Adrenal gland (tissue), 19 donors: ENCODE measurements at regions of chr6 and their contacts with region 1.

Region 1: GRCh38 chr6:151409260-151409659 is 17.9 kb upstream of the ZBTB2 start:
- DNase-seq: no peak
- H3K4me3 ChIP-seq: no peak overlapping the region
- H3K27ac ChIP-seq: no peak overlapping the region
- H3K4me1 ChIP-seq: no peaks in the 10 kb centered on the region
- H3K27me3 ChIP-seq: no peaks in the 10 kb centered on the region
- CTCF ChIP-seq: no peak
- POLR2A ChIP-seq: no peak

Region 2: DNA sequence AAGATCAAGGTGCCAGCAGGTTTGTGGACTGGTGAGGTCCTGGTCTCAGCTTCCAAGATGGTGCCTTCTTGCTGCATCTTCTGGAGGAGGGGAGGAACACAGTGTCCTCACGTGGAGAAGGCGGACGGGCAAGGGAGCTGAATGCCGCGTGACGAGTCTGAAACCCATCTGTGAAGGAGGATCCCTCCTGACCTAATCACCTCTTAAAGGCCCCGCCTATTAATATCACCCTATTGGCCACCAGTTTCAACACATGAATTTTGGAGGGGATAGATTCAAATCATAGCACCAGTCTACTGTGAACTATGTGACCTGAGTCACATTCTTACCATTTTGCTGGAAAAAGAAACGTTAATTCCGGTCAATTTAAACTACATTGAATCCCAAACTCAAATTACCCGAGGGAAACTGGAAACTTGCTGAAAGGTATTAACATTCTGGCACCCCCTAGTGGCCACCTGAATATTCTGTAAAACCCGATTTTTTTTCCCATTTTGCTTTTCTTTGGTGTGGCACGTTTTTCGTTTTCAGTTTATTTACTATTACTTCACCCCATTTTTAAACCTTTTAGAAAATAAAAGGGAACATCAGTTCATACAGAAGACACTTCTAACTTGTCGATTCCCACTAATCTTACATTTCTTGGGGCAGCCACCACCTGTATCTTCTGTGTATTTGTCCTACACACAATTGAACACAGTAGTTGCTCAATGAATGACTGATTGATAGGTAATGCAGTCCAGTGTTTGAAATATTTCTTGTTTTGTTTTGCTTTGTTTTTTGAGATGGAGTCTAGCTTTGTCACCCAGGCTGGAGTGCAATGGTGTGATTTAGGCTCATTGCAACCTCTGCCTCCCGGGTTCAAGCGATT is 66.6 kb after region 1 on chr6:
- intact Hi-C with region 1: loop called in 1 of 2 experiments (anchors 10 kb)
- DNase-seq: peak in 6 of 7 donors; percentile 39 to 71 (median 56)
- H3K4me3 ChIP-seq: peak overlapping the region in 1 of 4 donors; percentile 41
- H3K27ac ChIP-seq: peak overlapping the region in 1 of 5 donors; percentile 22
- H3K4me1 ChIP-seq: peaks cover 0 to 7% of the 10 kb centered on the region in 2 donors
- H3K27me3 ChIP-seq: no peaks in the 10 kb centered on the region
- CTCF ChIP-seq: peak; percentile 59 to 90 (median 74)
- POLR2A ChIP-seq: no peak